ENCODE measurements at regions of chr3 and their contacts with region 1.

Region 1: GRCh38 chr3:180989291-180990163 is at the start of gene DNAJC19:
- DNase-seq: peak; percentile 97
- H3K4me3 ChIP-seq: peak within 1 kb of the TSS; percentile 61 to 93 (median 78)
- H3K27ac ChIP-seq: peak within 1 kb of the TSS; percentile 84 to 90 (median 88)
- H3K4me1 ChIP-seq: peaks cover 19 to 41% (median 25%) of the 10 kb centered on the region in 4 donors
- H3K27me3 ChIP-seq: no peaks in the 10 kb centered on the region
- CTCF ChIP-seq: peak in 1 of 3 experiments; percentile 9
- EP300 ChIP-seq: no peak
- POLR2A ChIP-seq: peak; percentile 48
- total RNA-seq, gene DNAJC19: 28.4 to 65.6 (median 39.1) TPM

Region 2: DNA sequence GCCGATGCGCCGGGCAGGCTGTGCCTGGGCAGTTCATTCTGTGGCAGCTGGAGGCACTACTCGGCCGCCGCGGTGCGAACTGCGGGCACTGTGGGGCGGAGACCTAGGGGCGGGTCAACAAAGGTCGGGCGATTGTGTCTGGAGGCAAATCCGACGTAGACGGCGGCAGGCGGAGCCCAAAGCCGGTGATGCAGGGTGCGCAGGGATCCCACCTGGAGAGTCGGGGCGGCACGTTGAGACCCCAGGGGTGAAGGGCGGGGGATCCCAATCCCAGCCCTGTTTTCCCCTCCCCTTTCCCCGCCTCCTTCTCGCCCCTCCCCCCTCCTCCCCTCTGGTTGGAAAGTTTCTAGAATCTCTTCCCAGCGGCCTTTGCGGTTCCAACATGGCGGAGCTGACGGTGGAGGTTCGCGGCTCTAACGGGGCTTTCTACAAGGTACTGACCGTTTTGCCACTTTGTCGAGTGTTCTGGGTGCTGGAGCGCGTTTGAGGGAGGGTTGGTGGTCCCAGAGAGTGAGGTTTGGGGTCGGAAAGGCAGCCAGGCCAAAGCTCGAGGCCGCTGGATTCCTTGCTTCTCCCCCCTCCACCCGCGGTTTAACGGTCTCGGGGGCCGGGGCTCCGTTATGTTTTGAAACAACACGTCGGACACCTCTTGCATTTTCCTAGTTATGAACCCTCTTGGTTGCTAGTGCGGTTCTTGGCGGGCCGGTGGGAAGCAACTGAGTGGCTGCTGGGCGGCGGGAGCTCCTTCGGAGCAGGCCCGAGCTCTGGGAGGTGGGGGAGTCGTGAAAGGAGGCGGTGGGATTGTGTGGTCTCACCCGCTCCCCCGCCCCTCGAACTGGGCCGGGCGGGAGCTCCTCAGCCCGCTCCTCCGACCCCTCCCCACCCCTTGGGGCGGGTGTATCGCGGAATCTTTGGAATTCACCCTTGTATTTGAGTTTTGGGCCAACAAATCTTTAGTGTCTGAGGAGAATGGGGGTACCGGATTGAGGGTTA is 76.9 kb before region 1 on chr3 and contains the start of gene FXR1:
- intact Hi-C with region 1: loop called (anchors 5 kb)
- DNase-seq: peak; percentile 96
- H3K4me3 ChIP-seq: peak within 1 kb of the TSS; percentile 72 to 94 (median 88)
- H3K27ac ChIP-seq: peak within 1 kb of the TSS; percentile 91 to 96 (median 92)
- H3K4me1 ChIP-seq: peaks cover 28 to 47% (median 38%) of the 10 kb centered on the region in 4 donors
- H3K27me3 ChIP-seq: no peaks in the 10 kb centered on the region
- CTCF ChIP-seq: peak; percentile 80 to 99 (median 83)
- EP300 ChIP-seq: no peak
- POLR2A ChIP-seq: peak; percentile 47
- total RNA-seq, gene FXR1: 129 to 174 (median 164) TPM